Heart left ventricle (tissue), 16 donors: ENCODE measurements at regions of chr5 and their contacts with region 1.

Region 1: DNA sequence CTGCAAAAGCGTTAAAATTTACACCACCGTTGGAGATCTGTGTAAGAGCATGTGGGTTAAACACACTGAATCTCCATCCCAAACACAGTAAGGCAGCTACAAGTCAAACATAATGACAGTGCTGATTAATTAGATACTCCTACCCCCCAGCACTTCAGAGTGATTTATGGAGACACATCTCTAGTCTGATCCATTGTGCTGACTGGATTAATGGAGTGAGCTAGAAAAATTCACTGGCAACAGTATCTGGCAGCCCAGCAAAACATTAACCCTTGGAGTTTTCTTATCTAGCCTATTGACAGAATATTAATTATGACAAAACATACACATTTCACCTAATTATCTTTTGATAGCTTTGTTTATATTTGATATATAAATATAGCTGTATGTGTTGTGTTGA is 188.6 kb upstream of the ISL1 start:
- DNase-seq: no peak
- ATAC-seq: no peak
- H3K4me3 ChIP-seq: no peak overlapping the region
- H3K27ac ChIP-seq: no peak overlapping the region
- H3K4me1 ChIP-seq: no peaks in the 10 kb centered on the region
- H3K27me3 ChIP-seq: no peaks in the 10 kb centered on the region
- CTCF ChIP-seq: no peak
- POLR2A ChIP-seq: no peak

Region 2: DNA sequence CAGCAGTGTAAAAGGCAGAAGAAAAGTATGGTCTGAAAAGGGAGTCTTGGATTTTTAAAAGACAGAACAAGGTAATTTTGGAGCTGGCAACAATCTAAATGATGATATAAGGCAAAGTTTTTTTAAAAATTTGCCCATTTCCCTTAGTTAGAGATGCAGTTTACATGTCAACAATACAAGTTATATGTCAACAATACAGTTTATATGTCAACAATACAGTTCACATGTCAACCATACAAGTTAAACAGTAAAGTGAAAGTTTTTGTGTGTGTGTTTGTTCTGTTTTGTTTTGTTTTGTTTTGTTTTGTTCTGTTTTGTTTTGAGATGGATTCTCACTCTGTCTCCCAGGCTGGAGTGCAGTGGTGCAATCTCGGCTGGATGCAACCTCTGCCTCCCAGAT is 907.8 kb before region 1 on chr5:
- intact Hi-C with region 1: no loop called
- DNase-seq: no peak
- ATAC-seq: no peak
- H3K4me3 ChIP-seq: no peak overlapping the region
- H3K27ac ChIP-seq: no peak overlapping the region
- H3K4me1 ChIP-seq: no peaks in the 10 kb centered on the region
- H3K27me3 ChIP-seq: no peaks in the 10 kb centered on the region
- CTCF ChIP-seq: no peak
- POLR2A ChIP-seq: no peak

Region 3: GRCh38 chr5:51148437-51148836 is 46.2 kb before region 1 on chr5:
- intact Hi-C with region 1: no loop called
- DNase-seq: no peak
- ATAC-seq: no peak
- H3K4me3 ChIP-seq: no peak overlapping the region
- H3K27ac ChIP-seq: no peak overlapping the region
- H3K4me1 ChIP-seq: no peaks in the 10 kb centered on the region
- H3K27me3 ChIP-seq: no peaks in the 10 kb centered on the region
- CTCF ChIP-seq: no peak
- POLR2A ChIP-seq: no peak

Region 4: DNA sequence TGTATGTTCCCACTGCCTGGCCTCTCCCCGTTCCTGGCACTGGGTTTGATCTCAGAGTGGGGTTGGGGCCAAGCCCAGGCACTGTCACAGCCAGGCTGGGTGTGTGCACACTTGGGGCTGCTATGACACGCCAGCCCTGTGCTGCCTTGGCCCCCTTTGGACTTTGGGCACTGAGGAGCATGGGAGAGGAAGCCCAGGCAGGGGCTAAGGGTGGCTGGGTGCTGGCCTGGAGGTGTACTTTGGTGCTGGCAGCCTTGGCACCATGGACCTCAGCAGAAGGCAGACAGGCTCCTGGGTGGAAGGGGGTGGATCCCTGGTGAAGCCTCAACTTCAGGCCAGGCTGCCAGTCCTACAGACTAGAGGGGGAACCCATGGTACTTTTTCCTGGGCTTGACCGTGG is 35.0 kb before region 1 on chr5:
- intact Hi-C with region 1: loop called in 1 of 10 experiments (anchors 5 kb)
- DNase-seq: peak in 1 of 5 donors; percentile 40
- ATAC-seq: peak in 1 of 4 donors; percentile 18
- H3K4me3 ChIP-seq: no peak overlapping the region
- H3K27ac ChIP-seq: no peak overlapping the region
- H3K4me1 ChIP-seq: no peaks in the 10 kb centered on the region
- H3K27me3 ChIP-seq: no peaks in the 10 kb centered on the region
- CTCF ChIP-seq: no peak
- POLR2A ChIP-seq: no peak